ENCODE measurements at regions of chr5 and their contacts with region 1.

Region 1: GRCh38 chr5:52948418-52949076 is 40.6 kb upstream of the ITGA2 start:
- DNase-seq: peak; percentile 95
- H3K4me3 ChIP-seq: no peak overlapping the region
- H3K27ac ChIP-seq: peak overlapping the region; percentile 52
- H3K4me1 ChIP-seq: peaks cover 33% of the 10 kb centered on the region
- H3K27me3 ChIP-seq: no peaks in the 10 kb centered on the region
- CTCF ChIP-seq: peak; percentile 58 to 64
- POLR2A ChIP-seq: no peak

Region 2: GRCh38 chr5:52620315-52620714 is 328.2 kb before region 1 on chr5:
- CTCF ChIA-PET with region 1: no interaction called
- POLR2A ChIA-PET with region 1: no interaction called
- dilution Hi-C with region 1: no loop called
- intact Hi-C with region 1: no loop called
- DNase-seq: no peak
- H3K4me3 ChIP-seq: no peak overlapping the region
- H3K27ac ChIP-seq: no peak overlapping the region
- H3K4me1 ChIP-seq: no peaks in the 10 kb centered on the region
- H3K27me3 ChIP-seq: no peaks in the 10 kb centered on the region
- CTCF ChIP-seq: no peak
- POLR2A ChIP-seq: no peak

Region 3: GRCh38 chr5:52898961-52899680 is 49.4 kb before region 1 on chr5:
- CTCF ChIA-PET with region 1: no interaction called
- POLR2A ChIA-PET with region 1: no interaction called
- dilution Hi-C with region 1: no loop called
- intact Hi-C with region 1: no loop called
- DNase-seq: no peak
- H3K4me3 ChIP-seq: no peak overlapping the region
- H3K27ac ChIP-seq: no peak overlapping the region
- H3K4me1 ChIP-seq: no peaks in the 10 kb centered on the region
- H3K27me3 ChIP-seq: no peaks in the 10 kb centered on the region
- CTCF ChIP-seq: no peak
- POLR2A ChIP-seq: no peak

Region 4: DNA sequence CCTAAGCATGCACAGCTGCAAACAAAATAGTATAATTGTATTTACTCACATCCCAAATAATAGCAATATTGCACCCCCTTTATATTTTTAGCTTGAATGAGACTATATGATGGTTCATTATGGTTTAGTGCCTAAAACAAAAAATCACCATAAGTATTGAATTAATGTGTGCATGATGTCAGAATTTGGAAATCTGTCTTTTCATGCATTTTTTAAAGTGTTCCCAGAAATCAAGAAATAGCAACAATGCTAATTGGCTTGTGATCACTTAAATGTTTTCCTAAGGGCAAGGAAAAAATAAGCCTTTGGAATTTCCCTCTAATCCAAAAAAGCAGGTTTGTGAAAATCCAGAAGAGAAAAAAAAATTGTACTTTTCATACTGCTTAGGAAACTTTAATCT is 10.3 kb before region 1 on chr5:
- CTCF ChIA-PET with region 1: interaction called, 10 read pairs
- POLR2A ChIA-PET with region 1: no interaction called
- dilution Hi-C with region 1: no loop called
- intact Hi-C with region 1: no loop called
- DNase-seq: no peak
- H3K4me3 ChIP-seq: no peak overlapping the region
- H3K27ac ChIP-seq: no peak overlapping the region
- H3K4me1 ChIP-seq: no peaks in the 10 kb centered on the region
- H3K27me3 ChIP-seq: no peaks in the 10 kb centered on the region
- CTCF ChIP-seq: no peak
- POLR2A ChIP-seq: no peak

Region 5: GRCh38 chr5:52989781-52990527 is 41.4 kb after region 1 on chr5:
- CTCF ChIA-PET with region 1: interaction called, 64 read pairs
- POLR2A ChIA-PET with region 1: no interaction called
- dilution Hi-C with region 1: no loop called
- intact Hi-C with region 1: loop called (anchors 1 kb)
- DNase-seq: peak; percentile 78
- H3K4me3 ChIP-seq: peak overlapping the region; percentile 56 to 80 (median 61)
- H3K27ac ChIP-seq: peak overlapping the region; percentile 31
- H3K4me1 ChIP-seq: peaks cover 61% of the 10 kb centered on the region
- H3K27me3 ChIP-seq: no peaks in the 10 kb centered on the region
- CTCF ChIP-seq: peak; percentile 29 to 45
- POLR2A ChIP-seq: no peak

Region 6: DNA sequence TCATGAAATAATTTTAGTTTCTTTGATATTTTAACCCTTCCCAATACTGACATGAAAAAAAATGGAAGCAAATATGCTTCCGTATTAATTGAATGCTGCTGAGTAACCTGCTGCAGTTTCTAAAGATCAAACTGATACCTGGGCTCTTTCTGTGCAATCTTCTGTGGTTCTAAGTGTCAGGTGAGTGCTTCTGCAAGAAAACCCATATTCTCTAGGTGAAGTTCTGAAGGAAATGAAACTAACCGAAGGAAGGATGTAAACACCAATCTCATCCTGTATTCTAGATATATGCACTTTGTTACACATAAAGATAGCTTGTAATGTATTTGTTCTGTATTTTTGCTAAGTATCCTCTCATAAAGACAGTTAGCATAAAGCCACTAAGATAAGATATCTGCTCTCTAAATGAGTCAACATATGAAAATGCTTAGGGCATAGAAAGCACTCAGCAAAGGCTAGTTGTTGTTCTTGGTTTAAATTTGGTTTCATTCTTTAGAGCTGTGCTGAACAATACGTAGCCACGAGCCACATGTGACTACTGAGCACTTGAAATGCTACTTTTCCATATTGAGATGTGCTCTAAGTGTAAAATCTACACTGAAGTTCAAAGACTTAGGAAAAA is 92.6 kb after region 1 on chr5:
- CTCF ChIA-PET with region 1: interaction called, 46 read pairs
- POLR2A ChIA-PET with region 1: no interaction called
- dilution Hi-C with region 1: no loop called
- intact Hi-C with region 1: no loop called
- DNase-seq: peak; percentile 26
- H3K4me3 ChIP-seq: peak overlapping the region in 1 of 3 experiments; percentile 12
- H3K27ac ChIP-seq: no peak overlapping the region
- H3K4me1 ChIP-seq: peaks cover 51% of the 10 kb centered on the region
- H3K27me3 ChIP-seq: no peaks in the 10 kb centered on the region
- CTCF ChIP-seq: no peak
- POLR2A ChIP-seq: no peak

Region 7: DNA sequence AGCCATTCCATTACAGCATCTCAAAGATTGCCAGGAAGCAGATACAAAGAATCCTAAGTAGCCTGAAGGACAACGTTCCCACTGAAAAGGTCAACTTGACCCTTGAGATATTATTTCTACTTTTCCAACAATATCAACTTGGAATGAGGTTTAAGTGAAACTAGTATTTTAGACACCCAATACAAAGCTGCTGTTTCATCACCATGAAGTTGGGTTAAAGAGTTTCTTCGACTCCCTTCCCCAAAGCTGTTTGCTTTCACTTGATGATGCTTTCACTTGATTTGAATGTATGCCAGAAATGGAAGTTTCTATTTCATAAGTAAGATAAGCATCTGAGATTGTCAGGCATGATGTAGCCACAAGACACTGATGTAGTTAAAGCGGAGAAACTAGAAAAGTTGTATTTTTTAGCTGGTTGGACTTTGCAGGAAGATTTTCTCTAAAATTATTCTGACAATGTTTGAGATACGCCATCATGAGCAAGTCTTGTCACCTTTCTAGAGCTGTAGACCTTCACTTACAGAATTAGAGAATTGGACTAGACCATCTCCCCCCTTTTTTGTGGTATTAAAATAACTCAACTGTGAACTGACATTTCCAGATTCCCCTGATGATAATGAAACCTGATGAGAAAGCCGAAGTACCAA is 140.9 kb after region 1 on chr5:
- CTCF ChIA-PET with region 1: interaction called, 148 read pairs
- POLR2A ChIA-PET with region 1: interaction called, 3 read pairs
- dilution Hi-C with region 1: no loop called
- intact Hi-C with region 1: loop called (anchors 1 kb)
- DNase-seq: no peak
- H3K4me3 ChIP-seq: no peak overlapping the region
- H3K27ac ChIP-seq: no peak overlapping the region
- H3K4me1 ChIP-seq: peaks cover 16% of the 10 kb centered on the region
- H3K27me3 ChIP-seq: no peaks in the 10 kb centered on the region
- CTCF ChIP-seq: no peak
- POLR2A ChIP-seq: no peak

Region 8: GRCh38 chr5:53114988-53115387 is 166.4 kb after region 1 on chr5:
- CTCF ChIA-PET with region 1: interaction called, 53 read pairs
- POLR2A ChIA-PET with region 1: interaction called, 3 read pairs
- dilution Hi-C with region 1: no loop called
- intact Hi-C with region 1: no loop called
- DNase-seq: peak; percentile 51
- H3K4me3 ChIP-seq: no peak overlapping the region
- H3K27ac ChIP-seq: no peak overlapping the region
- H3K4me1 ChIP-seq: peaks cover 4% of the 10 kb centered on the region
- H3K27me3 ChIP-seq: peaks cover 0 to 2% of the 10 kb centered on the region in 2 experiments
- CTCF ChIP-seq: peak in 1 of 2 donors; percentile 31
- POLR2A ChIP-seq: no peak

Measured in endothelial cell of umbilical vein (primary cell).